Activated T-helper 1 cell treated with anti-CD3 and anti-CD28 coated beads, Interleukin-12 subunit alpha, Interleukin-12 subunit beta, Interleukin-2, Interleukin-4 antibody, amounts not matched to agents 30 ng/mL and 10 ng/mL and 1 ng/mL, durations not matched to agents 14 hours and 24 hours and 36 hours (primary cell): ENCODE measurements at regions of chr15 and their contacts with region 1.

Region 1: GRCh38 chr15:78506971-78507830 is at the start of gene HYKK:
- DNase-seq: peak; percentile 77
- H3K4me3 Mint-ChIP-seq: peak within 1 kb of the TSS; percentile 85
- H3K27ac Mint-ChIP-seq: no peak within 1 kb of the TSS
- H3K4me1 Mint-ChIP-seq: peaks cover 31% of the 10 kb centered on the region
- H3K27me3 Mint-ChIP-seq: peaks cover 9% of the 10 kb centered on the region
- total RNA-seq, gene HYKK: 1.2 and 1.4 TPM in 2 replicates

Region 2: GRCh38 chr15:78540141-78540928 is 33.1 kb after region 1 on chr15 and contains the start of gene PSMA4:
- intact Hi-C with region 1: loop called (anchors 1 kb)
- DNase-seq: peak; percentile 92
- H3K4me3 Mint-ChIP-seq: peak within 1 kb of the TSS; percentile 97
- H3K27ac Mint-ChIP-seq: peak within 1 kb of the TSS; percentile 100
- H3K4me1 Mint-ChIP-seq: peaks cover 42% of the 10 kb centered on the region
- H3K27me3 Mint-ChIP-seq: no peaks in the 10 kb centered on the region
- total RNA-seq, gene PSMA4: 317 and 318 TPM in 2 replicates

Region 3: GRCh38 chr15:78565097-78565951 is 58.1 kb after region 1 on chr15 and contains the start of gene CHRNA5:
- intact Hi-C with region 1: loop called (anchors 2 kb)
- DNase-seq: peak; percentile 44
- H3K4me3 Mint-ChIP-seq: peak within 1 kb of the TSS; percentile 88
- H3K27ac Mint-ChIP-seq: peak within 1 kb of the TSS; percentile 61
- H3K4me1 Mint-ChIP-seq: peaks cover 28% of the 10 kb centered on the region
- H3K27me3 Mint-ChIP-seq: peaks cover 31% of the 10 kb centered on the region
- total RNA-seq, gene CHRNA5: 6.4 and 10.3 TPM in 2 replicates

Region 4: GRCh38 chr15:78702609-78703333 is 195.6 kb after region 1 on chr15:
- intact Hi-C with region 1: no loop called
- DNase-seq: no peak
- H3K4me3 Mint-ChIP-seq: no peak overlapping the region
- H3K27ac Mint-ChIP-seq: no peak overlapping the region
- H3K4me1 Mint-ChIP-seq: no peaks in the 10 kb centered on the region
- H3K27me3 Mint-ChIP-seq: peaks cover 13% of the 10 kb centered on the region